T-cell (primary cell): ENCODE measurements at regions of chr19 and their contacts with region 1.

Region 1: GRCh38 chr19:4267101-4267900 is 11.8 kb upstream of the SHD start:
- DNase-seq: peak in 34 of 35 experiments; percentile 14 to 69 (median 48)
- ATAC-seq: peak; percentile 57 to 76 (median 64)
- H3K4me3 ChIP-seq: no peak overlapping the region
- H3K4me3 Mint-ChIP-seq: no peak overlapping the region
- H3K27ac ChIP-seq: no peak overlapping the region
- H3K27ac Mint-ChIP-seq: peak overlapping the region in 1 of 2 donors; percentile 34
- H3K4me1 ChIP-seq: peaks cover 7 to 34% of the 10 kb centered on the region in 2 experiments
- H3K4me1 Mint-ChIP-seq: peaks cover 21 to 45% (median 29%) of the 10 kb centered on the region in 3 donors
- H3K27me3 ChIP-seq: no peaks in the 10 kb centered on the region
- H3K27me3 Mint-ChIP-seq: no peaks in the 10 kb centered on the region

Region 2: DNA sequence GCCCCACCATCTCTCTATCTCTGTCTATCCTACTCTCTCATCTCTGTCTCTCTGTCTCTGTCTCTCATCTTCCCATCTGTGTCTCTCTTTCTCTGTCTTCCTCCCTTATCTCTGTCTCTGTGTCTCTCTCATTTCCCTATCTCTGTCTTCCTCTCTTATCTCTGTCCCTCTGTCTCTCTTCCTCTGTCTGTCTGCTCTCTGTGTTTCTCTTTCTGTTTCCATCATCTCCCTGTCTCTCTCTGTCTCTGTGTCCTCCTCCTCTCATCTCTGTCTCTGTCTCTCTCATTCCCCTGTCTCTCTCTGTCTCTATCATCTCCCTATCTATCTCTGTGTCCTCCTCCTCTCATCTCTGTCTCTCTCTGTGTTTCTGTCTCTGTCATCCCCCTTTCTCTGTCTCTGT is 39.5 kb before region 1 on chr19:
- CTCF ChIA-PET with region 1: no interaction called
- POLR2A ChIA-PET with region 1: no interaction called
- DNase-seq: no peak
- ATAC-seq: no peak
- H3K4me3 ChIP-seq: no peak overlapping the region
- H3K4me3 Mint-ChIP-seq: no peak overlapping the region
- H3K27ac ChIP-seq: no peak overlapping the region
- H3K27ac Mint-ChIP-seq: no peak overlapping the region
- H3K4me1 ChIP-seq: peaks cover 0 to 8% of the 10 kb centered on the region in 2 experiments
- H3K4me1 Mint-ChIP-seq: peaks cover 0 to 3% (median 0%) of the 10 kb centered on the region in 3 donors
- H3K27me3 ChIP-seq: peaks cover 3 to 46% of the 10 kb centered on the region in 2 experiments
- H3K27me3 Mint-ChIP-seq: peaks cover 5 to 20% of the 10 kb centered on the region in 2 donors

Region 3: GRCh38 chr19:4238812-4239211 is 28.5 kb before region 1 on chr19:
- CTCF ChIA-PET with region 1: no interaction called
- POLR2A ChIA-PET with region 1: no interaction called
- DNase-seq: no peak
- ATAC-seq: no peak
- H3K4me3 ChIP-seq: no peak overlapping the region
- H3K4me3 Mint-ChIP-seq: no peak overlapping the region
- H3K27ac ChIP-seq: no peak overlapping the region
- H3K27ac Mint-ChIP-seq: no peak overlapping the region
- H3K4me1 ChIP-seq: no peaks in the 10 kb centered on the region
- H3K4me1 Mint-ChIP-seq: no peaks in the 10 kb centered on the region
- H3K27me3 ChIP-seq: peaks cover 0 to 28% of the 10 kb centered on the region in 2 experiments
- H3K27me3 Mint-ChIP-seq: peaks cover 4 to 5% of the 10 kb centered on the region in 2 donors

Region 4: DNA sequence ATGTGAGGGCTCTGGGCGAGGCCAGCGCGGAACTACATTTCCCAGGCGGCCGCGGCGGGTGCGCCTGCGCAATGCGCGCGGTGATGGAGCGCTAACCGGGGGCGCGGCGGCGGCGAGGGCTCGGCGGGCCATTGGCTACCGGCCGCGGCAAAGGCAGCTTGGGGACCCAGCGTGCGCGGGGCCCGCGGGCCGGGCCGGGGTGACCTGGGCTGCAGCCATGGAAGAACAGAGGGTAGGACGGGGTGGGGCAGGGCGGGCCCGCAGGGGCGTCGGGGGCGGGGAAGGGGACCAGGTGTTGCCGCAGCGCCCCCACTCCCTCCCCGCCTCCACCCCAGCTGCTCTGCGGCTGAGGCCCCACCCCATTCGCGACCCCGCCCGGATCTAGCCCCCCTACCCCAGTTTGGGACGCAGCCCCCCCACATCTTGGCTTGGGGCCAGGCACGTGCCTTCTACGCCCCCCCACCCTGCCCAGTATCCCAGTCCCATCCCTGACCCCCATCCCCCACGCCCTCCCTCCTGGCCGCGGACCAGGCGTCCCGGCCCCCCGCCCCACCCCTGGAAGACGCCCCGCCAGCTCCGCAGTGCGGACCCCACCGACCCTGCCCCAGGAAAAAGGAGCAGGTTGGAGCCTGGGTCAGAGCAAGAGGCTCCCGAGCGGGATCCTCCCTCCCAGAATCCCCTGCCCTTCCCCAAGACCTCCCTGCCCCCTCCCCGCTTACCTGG is 37.4 kb after region 1 on chr19 and contains the start of gene FSD1:
- CTCF ChIA-PET with region 1: no interaction called
- POLR2A ChIA-PET with region 1: no interaction called
- DNase-seq: peak; percentile 30 to 70 (median 51)
- ATAC-seq: peak; percentile 57 to 64 (median 60)
- H3K4me3 ChIP-seq: peak within 1 kb of the TSS; percentile 16 to 39
- H3K4me3 Mint-ChIP-seq: peak within 1 kb of the TSS; percentile 47 to 95 (median 56)
- H3K27ac ChIP-seq: peak within 1 kb of the TSS; percentile 53
- H3K27ac Mint-ChIP-seq: peak within 1 kb of the TSS; percentile 61 to 71
- H3K4me1 ChIP-seq: peaks cover 20 to 34% of the 10 kb centered on the region in 2 experiments
- H3K4me1 Mint-ChIP-seq: peaks cover 30 to 37% (median 34%) of the 10 kb centered on the region in 3 donors
- H3K27me3 ChIP-seq: peaks cover 0 to 19% of the 10 kb centered on the region in 2 experiments
- H3K27me3 Mint-ChIP-seq: no peaks in the 10 kb centered on the region
- total RNA-seq, gene FSD1: 2.8 to 4.1 (median 3.4) TPM

Region 5: DNA sequence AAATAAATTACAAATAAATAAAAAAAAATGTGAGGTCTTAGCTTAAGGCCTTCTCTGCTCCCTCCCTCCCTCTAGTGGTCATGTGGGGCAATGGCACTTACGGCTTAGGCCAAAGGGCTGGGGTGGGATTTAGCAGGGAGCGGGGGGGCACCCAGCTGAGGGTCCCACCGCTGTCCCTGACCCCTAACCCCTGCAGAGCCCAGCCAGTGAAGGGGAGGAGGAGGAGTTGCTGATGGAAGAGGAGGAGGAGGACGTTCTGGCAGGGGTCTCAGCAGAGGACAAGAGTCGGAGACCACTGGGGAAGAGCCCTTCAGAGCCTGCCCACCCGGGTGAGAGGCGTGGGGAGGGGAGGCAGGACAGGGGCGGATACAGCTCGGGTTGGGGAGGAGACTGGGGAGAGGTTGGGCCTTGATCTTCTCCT is 85.4 kb after region 1 on chr19:
- CTCF ChIA-PET with region 1: interaction called, 4 to 14 read pairs
- POLR2A ChIA-PET with region 1: no interaction called
- DNase-seq: peak in 31 of 35 experiments; percentile 26 to 83 (median 52)
- ATAC-seq: peak; percentile 63 to 81 (median 76)
- H3K4me3 ChIP-seq: no peak overlapping the region
- H3K4me3 Mint-ChIP-seq: no peak overlapping the region
- H3K27ac ChIP-seq: no peak overlapping the region
- H3K27ac Mint-ChIP-seq: no peak overlapping the region
- H3K4me1 ChIP-seq: no peaks in the 10 kb centered on the region
- H3K4me1 Mint-ChIP-seq: peaks cover 0 to 5% (median 2%) of the 10 kb centered on the region in 3 donors
- H3K27me3 ChIP-seq: no peaks in the 10 kb centered on the region
- H3K27me3 Mint-ChIP-seq: no peaks in the 10 kb centered on the region